Calu3 (cell line): ENCODE measurements at regions of chr5 and their contacts with region 1.

Region 1: DNA sequence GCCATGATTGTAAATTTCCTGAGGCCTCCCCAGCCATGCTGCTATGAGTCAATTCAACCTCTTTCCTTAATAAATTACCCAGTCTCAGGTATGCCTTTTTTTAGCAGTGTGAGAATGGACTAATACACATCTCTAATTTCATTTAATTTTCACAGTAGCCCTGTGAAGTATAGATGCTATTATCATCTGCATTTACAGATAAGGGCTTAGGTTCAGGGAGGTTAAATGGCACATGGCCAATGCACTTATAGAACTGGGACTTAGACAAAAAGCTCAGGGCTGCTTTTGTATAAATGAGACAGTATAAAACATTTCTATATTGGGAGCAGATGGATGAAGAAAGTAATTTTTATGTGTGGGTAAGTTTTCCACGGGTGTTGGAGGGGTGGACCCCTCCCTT is 62.9 kb upstream of the PANK3 start:
- DNase-seq: no peak
- H3K4me3 Mint-ChIP-seq: no peak overlapping the region
- H3K27ac Mint-ChIP-seq: no peak overlapping the region
- H3K4me1 Mint-ChIP-seq: peaks cover 5% of the 10 kb centered on the region
- H3K27me3 Mint-ChIP-seq: no peaks in the 10 kb centered on the region
- CTCF ChIP-seq: no peak

Region 2: GRCh38 chr5:168600409-168600808 is 41.6 kb before region 1 on chr5:
- CTCF ChIA-PET with region 1: no interaction called
- intact Hi-C with region 1: loop called (anchors 1 kb)
- DNase-seq: no peak
- H3K4me3 Mint-ChIP-seq: no peak overlapping the region
- H3K27ac Mint-ChIP-seq: no peak overlapping the region
- H3K4me1 Mint-ChIP-seq: no peaks in the 10 kb centered on the region
- H3K27me3 Mint-ChIP-seq: peaks cover 33% of the 10 kb centered on the region
- CTCF ChIP-seq: no peak